ENCODE measurements at regions of chr2 and their contacts with region 1.

Region 1: GRCh38 chr2:37877457-37878315 is 47.4 kb upstream of the RMDN2 start:
- DNase-seq: no peak
- H3K4me3 ChIP-seq: no peak overlapping the region
- H3K27ac ChIP-seq: no peak overlapping the region
- H3K4me1 ChIP-seq: peaks cover 13 to 40% (median 32%) of the 10 kb centered on the region in 4 donors
- H3K27me3 ChIP-seq: no peaks in the 10 kb centered on the region
- CTCF ChIP-seq: peak; percentile 76 to 83 (median 78)
- EP300 ChIP-seq: no peak
- POLR2A ChIP-seq: no peak

Region 2: GRCh38 chr2:37394796-37395555 is 482.7 kb before region 1 on chr2:
- intact Hi-C with region 1: loop called (anchors 5 kb)
- DNase-seq: no peak
- H3K4me3 ChIP-seq: no peak overlapping the region
- H3K27ac ChIP-seq: no peak overlapping the region
- H3K4me1 ChIP-seq: peaks cover under 1 to 22% (median 9%) of the 10 kb centered on the region in 4 donors
- H3K27me3 ChIP-seq: no peaks in the 10 kb centered on the region
- CTCF ChIP-seq: no peak
- EP300 ChIP-seq: no peak
- POLR2A ChIP-seq: no peak

Region 3: DNA sequence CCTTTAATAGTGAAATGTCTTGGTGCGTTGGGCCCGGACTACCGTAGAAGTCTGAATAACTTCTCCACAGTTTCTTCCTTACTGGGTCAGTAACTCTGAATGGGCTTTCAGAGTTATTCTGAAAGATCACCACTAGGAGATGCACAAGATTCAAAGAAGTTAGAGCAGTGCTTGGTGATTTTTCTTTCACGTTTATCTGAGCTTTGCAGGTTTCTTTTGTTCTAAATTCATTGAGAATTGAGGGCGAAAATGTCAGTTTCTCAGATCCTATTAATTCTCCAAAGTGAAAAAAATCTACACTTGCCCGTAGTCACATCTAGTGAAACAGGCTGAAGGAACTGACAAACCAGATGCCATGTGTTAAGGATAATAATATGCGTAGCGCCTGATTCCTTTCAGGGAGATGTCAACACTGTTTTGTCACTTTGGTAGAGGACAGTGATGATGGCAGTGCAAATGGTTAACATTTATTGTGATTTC is 463.2 kb before region 1 on chr2:
- intact Hi-C with region 1: loop called (anchors 5 kb)
- DNase-seq: no peak
- H3K4me3 ChIP-seq: no peak overlapping the region
- H3K27ac ChIP-seq: peak overlapping the region; percentile 47 to 70 (median 57)
- H3K4me1 ChIP-seq: peaks cover 13 to 29% (median 26%) of the 10 kb centered on the region in 4 donors
- H3K27me3 ChIP-seq: no peaks in the 10 kb centered on the region
- CTCF ChIP-seq: peak; percentile 80 to 90 (median 82)
- EP300 ChIP-seq: no peak
- POLR2A ChIP-seq: no peak

Region 4: GRCh38 chr2:37635504-37636380 is 241.9 kb before region 1 on chr2:
- intact Hi-C with region 1: no loop called
- DNase-seq: no peak
- H3K4me3 ChIP-seq: no peak overlapping the region
- H3K27ac ChIP-seq: no peak overlapping the region
- H3K4me1 ChIP-seq: peaks cover 0 to 16% (median 5%) of the 10 kb centered on the region in 4 donors
- H3K27me3 ChIP-seq: no peaks in the 10 kb centered on the region
- CTCF ChIP-seq: no peak
- EP300 ChIP-seq: no peak
- POLR2A ChIP-seq: no peak

Measured in esophagus muscularis mucosa (tissue), 4 donors.